Activated B cell treated with CpG ODN at 0.5 μM for 24 hours (primary cell): ENCODE measurements at regions of chr10 and their contacts with region 1.

Region 1: GRCh38 chr10:96651998-96652431 is 65.2 kb upstream of the TM9SF3 start:
- DNase-seq: peak; percentile 42
- ATAC-seq: peak; percentile 85
- H3K4me3 Mint-ChIP-seq: peak overlapping the region; percentile 60
- H3K27ac Mint-ChIP-seq: peak overlapping the region; percentile 89
- H3K4me1 Mint-ChIP-seq: peaks cover 87% of the 10 kb centered on the region
- H3K27me3 Mint-ChIP-seq: no peaks in the 10 kb centered on the region
- CTCF ChIP-seq: no peak

Region 2: GRCh38 chr10:96358851-96359540 is 293.0 kb before region 1 on chr10 and contains the start of gene OPALIN:
- CTCF ChIA-PET with region 1: no interaction called
- POLR2A ChIA-PET with region 1: no interaction called
- intact Hi-C with region 1: no loop called
- DNase-seq: no peak
- ATAC-seq: no peak
- H3K4me3 Mint-ChIP-seq: no peak within 1 kb of the TSS
- H3K27ac Mint-ChIP-seq: no peak within 1 kb of the TSS
- H3K4me1 Mint-ChIP-seq: no peaks in the 10 kb centered on the region
- H3K27me3 Mint-ChIP-seq: peaks cover 13% of the 10 kb centered on the region
- CTCF ChIP-seq: no peak
- total RNA-seq, gene OPALIN: not detected in 2 replicates

Region 3: DNA sequence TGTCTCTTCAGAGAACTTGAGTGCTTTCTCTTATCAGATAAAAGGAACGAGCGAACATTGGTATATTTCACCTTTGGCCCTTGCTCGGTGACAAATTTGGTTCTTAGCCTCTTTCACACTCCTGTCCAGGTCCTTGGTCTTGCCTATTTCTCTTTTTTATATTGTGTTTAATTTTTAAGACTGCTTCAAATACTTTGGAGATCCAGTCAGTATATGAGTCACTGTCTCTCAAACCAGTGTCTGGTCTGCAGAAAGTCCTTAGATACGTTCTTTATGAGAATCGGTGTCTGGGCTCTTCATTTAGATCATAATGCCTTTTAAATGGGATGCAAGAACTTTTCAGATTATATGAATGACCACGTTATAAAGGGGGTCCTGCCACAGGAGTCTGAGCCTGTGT is 13.3 kb after region 1 on chr10:
- CTCF ChIA-PET with region 1: interaction called, 3 read pairs
- POLR2A ChIA-PET with region 1: interaction called, 7 read pairs
- intact Hi-C with region 1: loop called (anchors 1 kb)
- DNase-seq: no peak
- ATAC-seq: no peak
- H3K4me3 Mint-ChIP-seq: no peak overlapping the region
- H3K27ac Mint-ChIP-seq: peak overlapping the region; percentile 57
- H3K4me1 Mint-ChIP-seq: peaks cover 80% of the 10 kb centered on the region
- H3K27me3 Mint-ChIP-seq: no peaks in the 10 kb centered on the region
- CTCF ChIP-seq: no peak